HCT116 (cell line): ENCODE measurements at regions of chr12 and their contacts with region 1.

Region 1: GRCh38 chr12:11581179-11581755 is 68.2 kb upstream of the ETV6 start:
- DNase-seq: peak; percentile 46
- ATAC-seq: peak; percentile 38; the same call in 1 of the 2 replicates
- H3K4me3 ChIP-seq: no peak overlapping the region
- H3K27ac ChIP-seq: no peak overlapping the region
- H3K4me1 ChIP-seq: peaks cover 0 to 2% of the 10 kb centered on the region in 2 experiments; a peak in 2 of 4 replicates
- H3K27me3 ChIP-seq: peaks cover 22% of the 10 kb centered on the region
- CTCF ChIP-seq: peak; percentile 18 to 80 (median 55); a peak in 4 of 6 replicates
- POLR2A ChIP-seq: no peak
- RAD21 ChIP-seq: peak; percentile 86

Region 2: DNA sequence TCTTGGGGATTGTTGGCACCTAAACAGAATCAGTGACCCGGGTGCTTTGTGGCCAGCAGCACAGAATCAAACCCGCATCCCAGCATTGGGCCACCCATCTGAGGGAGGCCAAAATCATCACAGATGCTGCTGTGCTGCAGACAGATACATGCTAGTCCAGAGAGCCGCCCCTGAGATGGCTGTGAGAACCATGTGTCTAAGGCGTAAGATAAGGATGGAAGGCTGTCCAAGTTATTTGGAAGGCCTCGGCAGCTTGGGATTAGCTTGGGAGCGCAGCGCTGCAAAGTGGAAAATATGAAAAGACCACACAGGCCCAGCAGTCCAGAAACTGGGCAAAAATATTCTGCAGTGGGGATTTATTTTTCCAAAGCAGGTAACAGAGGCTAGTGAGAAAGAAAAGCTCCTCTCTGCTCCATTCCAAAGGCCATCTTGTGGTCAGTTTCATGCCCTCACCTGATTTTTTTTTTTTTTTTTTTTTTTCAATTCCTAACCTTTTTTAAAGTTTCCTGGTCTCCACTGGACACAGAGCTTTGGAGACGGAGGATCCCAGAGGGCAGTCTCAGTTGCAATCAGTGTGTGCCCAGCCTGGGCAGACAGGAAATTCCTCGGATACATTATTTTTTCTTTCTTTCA is 310.6 kb after region 1 on chr12:
- CTCF ChIA-PET with region 1: interaction called, 4 read pairs
- POLR2A ChIA-PET with region 1: no interaction called
- RAD21 ChIA-PET with region 1: no interaction called
- intact Hi-C with region 1: loop called (anchors 10 kb)
- DNase-seq: no peak
- ATAC-seq: no peak
- H3K4me3 ChIP-seq: no peak overlapping the region
- H3K27ac ChIP-seq: no peak overlapping the region
- H3K4me1 ChIP-seq: no peaks in the 10 kb centered on the region
- H3K27me3 ChIP-seq: no peaks in the 10 kb centered on the region
- CTCF ChIP-seq: no peak
- POLR2A ChIP-seq: no peak
- RAD21 ChIP-seq: peak; percentile 21; the same call in 1 of the 2 replicates

Region 3: GRCh38 chr12:12039897-12040296 is 458.6 kb after region 1 on chr12:
- CTCF ChIA-PET with region 1: interaction called, 17 read pairs
- POLR2A ChIA-PET with region 1: no interaction called
- RAD21 ChIA-PET with region 1: no interaction called
- intact Hi-C with region 1: no loop called
- DNase-seq: no peak
- ATAC-seq: no peak
- H3K4me3 ChIP-seq: no peak overlapping the region
- H3K27ac ChIP-seq: no peak overlapping the region
- H3K4me1 ChIP-seq: no peaks in the 10 kb centered on the region
- H3K27me3 ChIP-seq: no peaks in the 10 kb centered on the region
- CTCF ChIP-seq: no peak
- POLR2A ChIP-seq: no peak
- RAD21 ChIP-seq: no peak

Region 4: GRCh38 chr12:12334367-12335040 is 753.2 kb after region 1 on chr12:
- CTCF ChIA-PET with region 1: interaction called, 3 read pairs
- POLR2A ChIA-PET with region 1: no interaction called
- RAD21 ChIA-PET with region 1: no interaction called
- intact Hi-C with region 1: loop called (anchors 5 kb)
- DNase-seq: peak; percentile 47
- ATAC-seq: peak; percentile 94
- H3K4me3 ChIP-seq: no peak overlapping the region
- H3K27ac ChIP-seq: no peak overlapping the region
- H3K4me1 ChIP-seq: peaks cover 0 to 14% of the 10 kb centered on the region in 2 experiments; a peak in 1 of 4 replicates
- H3K27me3 ChIP-seq: no peaks in the 10 kb centered on the region
- CTCF ChIP-seq: peak; percentile 80 to 96 (median 85)
- POLR2A ChIP-seq: no peak
- RAD21 ChIP-seq: peak; percentile 69